HEK293T (cell line): ENCODE measurements at regions of chr22 and their contacts with region 1.

Region 1: DNA sequence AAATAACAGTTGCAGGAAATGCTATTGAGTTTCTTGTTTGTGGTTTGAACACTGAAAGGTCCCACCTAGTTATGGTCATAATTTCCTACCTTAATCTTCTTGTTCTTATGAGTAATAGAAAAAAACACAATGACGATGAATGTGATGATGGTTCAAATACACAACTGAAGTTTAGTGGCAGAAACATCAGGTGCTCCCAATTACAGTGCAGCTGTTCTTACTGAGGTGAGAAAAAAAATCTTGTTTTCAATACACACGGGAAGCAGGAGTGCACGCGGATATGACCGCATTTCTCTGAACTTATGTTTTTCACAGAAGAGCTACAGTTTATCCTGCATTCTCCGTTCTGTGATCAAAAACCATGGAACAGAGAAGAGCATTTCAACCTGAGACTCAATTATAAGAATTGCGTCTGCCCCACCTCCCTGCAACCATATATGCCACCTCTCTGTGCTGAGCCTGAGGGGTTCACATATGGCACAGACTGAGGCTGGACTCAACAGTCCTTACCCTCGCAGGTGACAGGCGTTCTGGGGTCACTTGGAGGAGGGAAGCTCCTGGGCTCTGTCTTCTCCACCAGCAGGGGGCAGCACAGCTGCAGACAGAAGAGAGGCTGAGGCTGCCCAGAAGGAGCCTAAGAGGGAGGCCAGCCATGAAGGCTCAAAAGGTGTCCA is 99.7 kb upstream of the IGLL5 start:
- DNase-seq: peak; percentile 85

Region 2: DNA sequence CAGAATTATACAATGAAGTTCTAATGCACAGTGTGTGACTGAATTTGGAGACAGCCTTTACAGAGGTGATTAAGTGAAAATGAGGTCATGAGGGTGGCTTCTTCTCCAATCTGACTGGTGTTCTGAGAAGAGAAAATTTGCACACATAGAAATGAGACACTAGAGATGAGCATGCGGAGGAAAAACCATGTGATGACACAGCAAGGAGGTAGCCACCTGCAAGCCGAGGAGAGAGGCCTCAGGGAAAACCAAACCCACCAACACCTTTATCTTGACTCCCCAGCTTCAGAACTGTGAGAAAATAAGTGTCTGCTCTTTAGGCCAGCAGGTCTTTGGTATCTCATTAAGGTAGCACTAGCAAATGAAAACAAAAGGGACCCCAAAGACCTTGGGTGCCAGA is 50.3 kb before region 1 on chr22:
- CTCF ChIA-PET with region 1: no interaction called
- POLR2A ChIA-PET with region 1: no interaction called
- DNase-seq: no peak

Region 3: DNA sequence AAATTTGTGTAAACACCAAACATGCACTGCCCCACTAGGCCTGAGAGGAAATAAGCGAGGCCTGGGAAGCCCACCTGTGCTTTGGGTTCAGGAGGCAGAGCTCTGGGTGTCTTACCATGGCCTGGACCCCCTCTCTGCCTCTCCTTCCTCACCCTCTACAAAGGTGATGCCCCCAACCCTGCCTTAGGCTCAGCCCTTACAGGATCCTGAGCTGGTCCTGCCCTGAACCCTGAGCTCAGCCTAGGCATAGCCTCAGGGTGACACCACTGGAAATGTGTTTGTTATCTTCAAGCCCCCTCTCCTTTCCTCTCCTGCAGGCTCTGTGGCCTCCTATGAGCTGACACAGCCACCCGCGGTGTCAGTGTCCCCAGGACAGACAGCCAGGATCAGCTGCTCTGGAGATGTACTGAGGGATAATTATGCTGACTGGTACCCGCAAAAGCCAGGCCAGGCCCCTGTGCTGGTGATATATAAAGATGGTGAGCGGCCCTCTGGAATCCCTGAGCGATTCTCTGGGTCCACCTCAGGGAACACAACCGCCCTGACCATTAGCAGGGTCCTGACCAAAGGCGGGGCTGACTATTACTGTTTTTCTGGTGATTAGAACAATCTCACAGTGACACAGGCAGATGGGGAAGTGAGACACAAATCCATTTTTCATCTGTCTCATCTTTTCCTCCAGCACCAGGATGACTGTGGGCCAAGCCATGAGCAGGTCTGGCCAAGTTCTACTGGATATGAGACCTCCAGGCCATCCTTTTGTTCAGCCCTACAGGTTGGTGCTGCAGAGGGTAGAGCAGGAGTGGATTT is 25.8 kb before region 1 on chr22:
- CTCF ChIA-PET with region 1: no interaction called
- POLR2A ChIA-PET with region 1: no interaction called
- DNase-seq: no peak

Region 4: GRCh38 chr22:22877523-22878210 is 89.7 kb after region 1 on chr22:
- CTCF ChIA-PET with region 1: interaction called, 14 read pairs
- POLR2A ChIA-PET with region 1: no interaction called
- DNase-seq: peak; percentile 89